Right ventricle myocardium superior (tissue), 1 donor: ENCODE measurements at regions of chr12 and their contacts with region 1.

Region 1: GRCh38 chr12:121678716-121679580 is 9.5 kb upstream of the MORN3 start:
- DNase-seq: no peak
- ATAC-seq: no peak

Region 2: DNA sequence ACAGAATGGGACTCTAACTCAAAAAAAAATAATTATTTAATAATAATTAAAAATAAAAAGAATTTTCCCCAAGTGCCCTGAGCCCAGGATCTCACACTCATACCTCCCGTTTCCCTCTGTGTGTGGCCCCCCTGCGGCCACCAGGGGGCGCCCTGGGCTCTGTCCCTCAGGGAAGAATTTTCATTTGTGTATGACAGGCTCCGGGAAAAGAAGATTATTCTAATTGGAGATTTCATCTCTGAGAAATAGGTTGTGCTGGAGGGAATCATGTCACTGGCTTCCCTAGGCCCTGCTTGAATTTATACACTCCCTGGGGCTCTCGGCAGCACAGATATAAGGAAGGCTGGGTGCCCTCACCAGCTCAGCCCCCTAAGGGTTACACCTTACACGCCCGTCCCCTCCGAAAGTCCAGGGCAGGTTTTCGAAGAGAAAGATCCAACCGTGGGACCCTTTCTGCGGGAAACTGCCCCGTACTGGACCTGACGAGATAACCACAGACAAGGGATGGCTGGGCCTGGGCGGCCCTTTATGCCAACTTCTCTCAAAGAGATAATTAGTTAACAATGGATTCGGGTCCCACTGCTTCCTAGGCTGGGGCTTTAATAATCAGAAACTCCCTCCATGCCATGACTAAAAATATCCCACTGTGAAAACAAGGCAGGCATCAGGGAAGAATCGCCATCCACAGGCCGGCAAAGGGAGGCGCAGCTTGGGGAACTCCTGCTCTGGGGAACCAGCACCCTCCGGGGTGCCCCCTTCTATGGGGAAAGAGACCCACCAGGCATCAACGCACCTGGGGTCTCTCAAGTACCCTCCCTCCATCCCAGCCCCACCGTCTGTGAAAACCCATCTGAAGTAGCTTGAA is 178.8 kb before region 1 on chr12:
- intact Hi-C with region 1: loop called (anchors 5 kb)
- DNase-seq: peak; percentile 89
- ATAC-seq: peak; percentile 92

Region 3: GRCh38 chr12:121545480-121545879 is 133.5 kb before region 1 on chr12:
- intact Hi-C with region 1: loop called (anchors 5 kb)
- DNase-seq: no peak
- ATAC-seq: no peak

Region 4: GRCh38 chr12:121626087-121626852 is 52.7 kb before region 1 on chr12 and contains the start of gene ORAI1:
- intact Hi-C with region 1: loop called (anchors 2 kb)
- DNase-seq: peak; percentile 99
- ATAC-seq: peak; percentile 95
- total RNA-seq, gene ORAI1: 9.6 TPM